ENCODE measurements at regions of chr5 and their contacts with region 1.

Region 1: DNA sequence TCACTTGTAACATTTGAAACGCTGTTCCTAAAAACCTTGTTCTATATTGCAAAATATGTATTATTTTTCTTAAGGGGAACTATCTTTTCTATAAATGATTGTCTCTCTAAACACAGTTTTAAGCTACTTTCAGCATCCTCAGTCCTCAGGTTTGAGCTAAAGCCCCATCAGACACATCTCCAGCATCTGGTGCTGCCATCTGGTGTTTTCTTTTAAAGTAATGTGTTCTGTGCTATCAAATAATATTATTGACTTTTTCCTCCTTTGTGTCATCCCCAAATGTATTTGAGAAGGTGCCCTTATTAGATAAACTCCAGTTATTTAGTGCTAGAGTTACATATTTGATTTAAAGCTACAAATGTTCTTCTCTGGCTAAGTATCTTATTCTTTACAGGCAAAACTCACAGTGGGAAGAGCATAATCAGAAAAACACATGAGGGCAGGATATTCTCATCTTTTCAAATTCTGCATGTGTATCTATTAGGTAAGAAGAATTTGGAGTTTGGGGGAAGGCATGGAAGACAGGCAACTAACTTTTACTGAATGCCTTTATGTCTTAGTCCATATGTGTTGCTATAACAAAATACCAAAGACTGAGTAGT is 27.5 kb downstream of the ZNF474 start:
- DNase-seq: peak; percentile 73
- H3K4me3 Mint-ChIP-seq: no peak overlapping the region
- H3K27ac Mint-ChIP-seq: no peak overlapping the region
- H3K4me1 Mint-ChIP-seq: peaks cover 12% of the 10 kb centered on the region
- H3K27me3 Mint-ChIP-seq: no peaks in the 10 kb centered on the region
- CTCF ChIP-seq: peak; percentile 70

Region 2: DNA sequence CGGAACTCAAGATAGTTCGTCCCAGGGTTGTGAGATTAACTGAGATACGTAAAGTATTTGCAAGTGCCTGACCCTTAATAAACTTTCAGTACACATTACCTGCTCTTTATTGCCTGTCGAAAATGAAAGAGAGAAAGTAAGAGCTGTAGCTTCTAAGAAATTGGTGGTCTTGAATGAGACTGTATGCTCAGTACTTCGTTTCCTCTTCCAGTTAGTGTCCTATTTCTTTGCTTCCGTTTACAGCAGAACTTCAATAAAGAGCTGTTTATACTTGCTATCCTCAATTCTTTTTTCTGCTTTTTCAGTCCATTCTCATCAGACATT is 194.5 kb before region 1 on chr5:
- CTCF ChIA-PET with region 1: interaction called, 37 read pairs
- POLR2A ChIA-PET with region 1: interaction called, 23 read pairs
- intact Hi-C with region 1: loop called (anchors 1 kb)
- DNase-seq: no peak
- H3K4me3 Mint-ChIP-seq: peak overlapping the region; percentile 78
- H3K27ac Mint-ChIP-seq: peak overlapping the region; percentile 96
- H3K4me1 Mint-ChIP-seq: peaks cover 13% of the 10 kb centered on the region
- H3K27me3 Mint-ChIP-seq: no peaks in the 10 kb centered on the region
- CTCF ChIP-seq: no peak

Region 3: GRCh38 chr5:122091936-122092600 is 64.8 kb before region 1 on chr5:
- CTCF ChIA-PET with region 1: interaction called, 237 read pairs
- POLR2A ChIA-PET with region 1: interaction called, 9 read pairs
- intact Hi-C with region 1: loop called (anchors 1 kb)
- DNase-seq: peak; percentile 73
- H3K4me3 Mint-ChIP-seq: no peak overlapping the region
- H3K27ac Mint-ChIP-seq: no peak overlapping the region
- H3K4me1 Mint-ChIP-seq: peaks cover 5% of the 10 kb centered on the region
- H3K27me3 Mint-ChIP-seq: no peaks in the 10 kb centered on the region
- CTCF ChIP-seq: peak; percentile 70

Region 4: GRCh38 chr5:122111460-122111859 is 45.4 kb before region 1 on chr5:
- CTCF ChIA-PET with region 1: interaction called, 129 read pairs
- POLR2A ChIA-PET with region 1: interaction called, 3 read pairs
- intact Hi-C with region 1: no loop called
- DNase-seq: no peak
- H3K4me3 Mint-ChIP-seq: no peak overlapping the region
- H3K27ac Mint-ChIP-seq: no peak overlapping the region
- H3K4me1 Mint-ChIP-seq: peaks cover 6% of the 10 kb centered on the region
- H3K27me3 Mint-ChIP-seq: no peaks in the 10 kb centered on the region
- CTCF ChIP-seq: no peak

Region 5: DNA sequence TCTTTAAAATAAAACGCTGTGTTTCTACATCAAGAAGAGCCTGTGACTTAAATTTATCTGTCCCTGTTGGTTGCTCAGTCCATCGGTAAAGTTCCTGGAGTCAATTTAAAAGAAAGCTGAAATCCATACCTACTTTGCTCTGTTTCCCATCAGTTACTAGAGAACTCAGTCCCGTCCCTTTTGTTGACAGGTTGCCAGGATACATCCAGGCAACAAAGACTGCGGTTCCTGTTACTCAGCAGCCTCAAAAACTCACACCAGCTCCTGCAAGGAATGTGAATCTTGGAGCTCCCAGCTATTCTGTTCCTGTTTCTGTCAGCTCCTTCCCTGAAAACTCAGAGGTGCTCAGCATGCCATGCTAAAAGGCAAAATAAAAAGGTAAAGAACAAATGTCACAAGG is 27.5 kb before region 1 on chr5 and contains the start of gene ZNF474:
- CTCF ChIA-PET with region 1: interaction called, 55 read pairs
- POLR2A ChIA-PET with region 1: interaction called, 4 read pairs
- intact Hi-C with region 1: loop called (anchors 2 kb)
- DNase-seq: peak; percentile 92
- H3K4me3 Mint-ChIP-seq: no peak within 1 kb of the TSS
- H3K27ac Mint-ChIP-seq: peak within 1 kb of the TSS; percentile 61
- H3K4me1 Mint-ChIP-seq: peaks cover 8% of the 10 kb centered on the region
- H3K27me3 Mint-ChIP-seq: no peaks in the 10 kb centered on the region
- CTCF ChIP-seq: no peak
- total RNA-seq, gene ZNF474: 0.25 and 0.56 TPM in 2 replicates

Region 6: DNA sequence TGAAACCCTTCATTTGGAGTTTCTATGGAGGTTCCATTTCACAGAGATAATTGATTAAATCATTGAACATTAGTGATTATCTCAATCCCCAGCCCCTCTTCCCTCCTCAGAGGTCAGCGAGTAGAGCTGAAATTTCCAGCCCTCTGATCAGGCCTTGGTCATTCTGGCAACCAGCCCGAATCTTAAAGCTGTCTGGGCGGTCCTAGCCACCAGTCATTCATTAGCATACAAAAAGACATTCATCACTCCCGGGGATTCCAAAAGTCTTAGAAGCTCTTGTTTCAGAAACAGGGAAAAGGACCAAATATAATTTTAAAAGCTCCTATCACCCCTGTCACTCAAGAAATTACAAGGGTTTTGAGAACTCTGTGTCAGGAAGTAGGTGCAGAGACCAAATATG is 13.8 kb after region 1 on chr5:
- CTCF ChIA-PET with region 1: interaction called, 15 read pairs
- POLR2A ChIA-PET with region 1: interaction called, 4 read pairs
- intact Hi-C with region 1: no loop called
- DNase-seq: peak; percentile 81
- H3K4me3 Mint-ChIP-seq: no peak overlapping the region
- H3K27ac Mint-ChIP-seq: no peak overlapping the region
- H3K4me1 Mint-ChIP-seq: peaks cover 12% of the 10 kb centered on the region
- H3K27me3 Mint-ChIP-seq: no peaks in the 10 kb centered on the region
- CTCF ChIP-seq: no peak

Measured in MCF 10A (cell line).